ENCODE measurements at regions of chr11 and their contacts with region 1.

Region 1: GRCh38 chr11:67507864-67508485 is at the start of gene CDK2AP2:
- DNase-seq: peak; percentile 98 to 100
- H3K4me3 ChIP-seq: peak within 1 kb of the TSS; percentile 65 to 71
- H3K27ac ChIP-seq: peak within 1 kb of the TSS; percentile 95 to 96
- H3K4me1 ChIP-seq: peaks cover 16 to 27% of the 10 kb centered on the region in 2 donors
- H3K27me3 ChIP-seq: no peaks in the 10 kb centered on the region
- CTCF ChIP-seq: no peak
- total RNA-seq, gene CDK2AP2: 159 TPM

Region 2: DNA sequence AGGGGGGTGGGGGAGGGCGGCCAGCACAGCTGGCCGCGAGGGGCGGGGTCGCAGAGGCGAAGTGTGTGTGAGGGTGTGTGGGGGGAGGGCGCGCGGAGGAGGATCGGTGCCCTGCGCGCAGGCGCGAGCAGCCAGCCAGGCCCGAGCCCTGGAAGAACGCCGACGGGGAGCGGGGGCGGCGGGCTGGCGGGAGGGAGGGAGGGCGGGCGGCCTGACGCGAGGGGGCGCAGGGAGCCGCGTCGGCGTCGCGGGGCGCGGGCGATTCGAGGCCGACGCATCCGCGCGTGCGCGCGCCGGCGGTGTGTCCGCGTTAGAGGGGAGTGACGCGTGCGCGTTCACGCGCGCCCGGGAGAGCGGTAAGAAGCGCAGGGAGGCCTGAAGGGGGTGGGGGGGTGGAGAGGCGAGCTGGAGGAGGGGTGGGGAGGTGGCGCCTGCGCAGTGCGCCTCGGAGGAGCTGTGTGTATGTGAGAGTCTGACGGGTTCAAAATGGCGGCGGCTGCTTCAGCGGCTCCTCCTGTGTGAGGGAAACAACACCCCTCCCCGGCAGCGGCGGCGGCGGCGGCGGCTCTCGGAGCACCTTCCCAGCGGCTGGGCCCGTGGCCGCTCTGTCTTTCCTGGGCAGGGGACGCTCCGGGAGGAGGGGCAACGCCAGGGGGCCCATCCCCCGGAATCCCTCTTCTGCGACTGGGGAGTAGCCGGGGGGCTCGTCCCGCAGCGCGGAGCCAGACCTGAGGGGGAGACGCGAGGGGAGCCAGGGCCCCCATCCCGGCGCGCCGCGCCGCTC is 389.0 kb before region 1 on chr11 and contains the start of gene KDM2A:
- intact Hi-C with region 1: loop called (anchors 10 kb)
- DNase-seq: peak; percentile 96 to 100
- H3K4me3 ChIP-seq: peak within 1 kb of the TSS; percentile 99 to 100
- H3K27ac ChIP-seq: peak within 1 kb of the TSS; percentile 96 to 100
- H3K4me1 ChIP-seq: peaks cover 5 to 20% of the 10 kb centered on the region in 2 donors
- H3K27me3 ChIP-seq: no peaks in the 10 kb centered on the region
- CTCF ChIP-seq: no peak
- total RNA-seq, gene KDM2A: 129 TPM

Region 3: GRCh38 chr11:67353317-67354074 is 154.5 kb before region 1 on chr11 and contains the start of gene POLD4:
- intact Hi-C with region 1: loop called (anchors 1 kb)
- DNase-seq: peak; percentile 96 to 100
- H3K4me3 ChIP-seq: peak within 1 kb of the TSS; percentile 68 to 80
- H3K27ac ChIP-seq: peak within 1 kb of the TSS; percentile 98 to 99
- H3K4me1 ChIP-seq: peaks cover 26 to 60% of the 10 kb centered on the region in 2 donors
- H3K27me3 ChIP-seq: no peaks in the 10 kb centered on the region
- CTCF ChIP-seq: no peak
- total RNA-seq, gene POLD4: 107 TPM

Region 4: DNA sequence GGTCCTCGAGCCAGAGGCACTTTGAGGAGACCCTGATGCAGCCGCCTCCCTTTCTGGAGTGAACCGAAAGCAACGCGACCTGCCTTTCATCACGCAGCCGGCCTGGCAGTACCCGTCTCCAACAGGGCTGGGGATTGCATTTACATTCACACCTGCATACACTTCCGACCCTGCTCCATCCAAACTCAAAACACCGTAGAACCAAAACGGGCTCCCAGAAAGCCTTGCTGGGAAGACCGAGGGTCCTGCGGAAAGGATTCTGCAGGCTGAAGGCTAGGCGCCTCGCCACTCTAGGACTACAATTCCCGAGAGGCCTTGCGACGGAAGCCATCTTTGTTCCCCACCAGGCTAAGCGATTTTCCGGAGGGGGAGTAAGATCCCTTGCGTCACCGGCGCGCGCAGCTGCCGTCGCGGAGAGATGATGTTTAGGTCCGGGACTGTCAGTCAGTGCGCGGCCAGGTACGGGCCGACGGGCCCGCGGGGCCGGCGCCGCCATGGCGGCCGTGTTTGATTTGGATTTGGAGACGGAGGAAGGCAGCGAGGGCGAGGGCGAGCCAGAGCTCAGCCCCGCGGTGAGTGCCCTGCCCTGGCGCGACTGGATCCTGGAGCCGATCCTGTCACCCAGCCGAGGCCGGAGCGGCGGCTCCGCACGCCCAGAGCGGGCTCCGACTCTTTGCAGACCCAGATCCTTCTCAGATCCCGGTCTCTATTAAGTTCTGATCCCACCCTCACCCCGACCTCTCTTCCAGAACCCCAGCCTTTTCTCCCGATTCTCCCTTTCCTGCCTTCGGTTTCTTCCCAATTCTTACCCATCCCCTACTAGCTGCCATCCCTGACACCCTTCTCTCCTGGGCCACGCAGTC is 79.7 kb before region 1 on chr11 and contains the start of gene RPS6KB2:
- intact Hi-C with region 1: loop called (anchors 2 kb)
- DNase-seq: peak; percentile 96 to 99
- H3K4me3 ChIP-seq: peak within 1 kb of the TSS; percentile 75 to 94
- H3K27ac ChIP-seq: peak within 1 kb of the TSS; percentile 86 to 91
- H3K4me1 ChIP-seq: peaks cover 6 to 16% of the 10 kb centered on the region in 2 donors
- H3K27me3 ChIP-seq: no peaks in the 10 kb centered on the region
- CTCF ChIP-seq: no peak
- total RNA-seq, gene RPS6KB2: 72.3 TPM

Region 5: GRCh38 chr11:67482825-67483798 is 24.9 kb before region 1 on chr11 and contains the start of gene AIP:
- intact Hi-C with region 1: loop called (anchors 1 kb)
- DNase-seq: peak; percentile 92 to 99
- H3K4me3 ChIP-seq: peak within 1 kb of the TSS; percentile 53 to 66
- H3K27ac ChIP-seq: peak within 1 kb of the TSS; percentile 84 to 87
- H3K4me1 ChIP-seq: peaks cover 7 to 15% of the 10 kb centered on the region in 2 donors
- H3K27me3 ChIP-seq: no peaks in the 10 kb centered on the region
- CTCF ChIP-seq: peak; percentile 20 to 28 (median 22)
- total RNA-seq, gene AIP: 116 TPM

Region 6: DNA sequence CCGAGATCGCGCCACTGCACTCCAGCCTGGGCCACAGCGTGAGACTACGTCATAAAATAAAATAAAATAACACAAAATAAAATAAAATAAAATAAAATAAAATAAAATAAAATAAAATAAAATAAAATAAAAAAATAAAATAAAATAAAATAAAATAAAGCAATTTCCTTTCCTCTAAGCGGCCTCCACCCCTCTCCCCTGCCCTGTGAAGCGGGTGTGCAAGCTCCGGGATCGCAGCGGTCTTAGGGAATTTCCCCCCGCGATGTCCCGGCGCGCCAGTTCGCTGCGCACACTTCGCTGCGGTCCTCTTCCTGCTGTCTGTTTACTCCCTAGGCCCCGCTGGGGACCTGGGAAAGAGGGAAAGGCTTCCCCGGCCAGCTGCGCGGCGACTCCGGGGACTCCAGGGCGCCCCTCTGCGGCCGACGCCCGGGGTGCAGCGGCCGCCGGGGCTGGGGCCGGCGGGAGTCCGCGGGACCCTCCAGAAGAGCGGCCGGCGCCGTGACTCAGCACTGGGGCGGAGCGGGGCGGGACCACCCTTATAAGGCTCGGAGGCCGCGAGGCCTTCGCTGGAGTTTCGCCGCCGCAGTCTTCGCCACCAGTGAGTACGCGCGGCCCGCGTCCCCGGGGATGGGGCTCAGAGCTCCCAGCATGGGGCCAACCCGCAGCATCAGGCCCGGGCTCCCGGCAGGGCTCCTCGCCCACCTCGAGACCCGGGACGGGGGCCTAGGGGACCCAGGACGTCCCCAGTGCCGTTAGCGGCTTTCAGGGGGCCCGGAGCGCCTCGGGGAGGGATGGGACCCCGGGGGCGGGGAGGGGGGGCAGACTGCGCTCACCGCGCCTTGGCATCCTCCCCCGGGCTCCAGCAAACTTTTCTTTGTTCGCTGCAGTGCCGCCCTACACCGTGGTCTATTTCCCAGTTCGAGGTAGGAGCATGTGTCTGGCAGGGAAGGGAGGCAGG is 75.6 kb after region 1 on chr11 and contains the start of gene GSTP1:
- intact Hi-C with region 1: loop called (anchors 1 kb)
- DNase-seq: peak; percentile 58 to 96
- H3K4me3 ChIP-seq: peak within 1 kb of the TSS; percentile 90 to 98
- H3K27ac ChIP-seq: peak within 1 kb of the TSS; percentile 100
- H3K4me1 ChIP-seq: peaks cover 11 to 17% of the 10 kb centered on the region in 2 donors
- H3K27me3 ChIP-seq: no peaks in the 10 kb centered on the region
- CTCF ChIP-seq: peak; percentile 55 to 95 (median 83)
- total RNA-seq, gene GSTP1: 1,335 TPM

Measured in ascending aorta (tissue), 2 donors.